GM10248 (cell line): ENCODE measurements at regions of chr10 and their contacts with region 1.

Region 1: GRCh38 chr10:124719213-124719851 is 24.8 kb downstream of the FAM53B start:
- DNase-seq: peak; percentile 67
- CTCF ChIP-seq: peak; percentile 48

Region 2: DNA sequence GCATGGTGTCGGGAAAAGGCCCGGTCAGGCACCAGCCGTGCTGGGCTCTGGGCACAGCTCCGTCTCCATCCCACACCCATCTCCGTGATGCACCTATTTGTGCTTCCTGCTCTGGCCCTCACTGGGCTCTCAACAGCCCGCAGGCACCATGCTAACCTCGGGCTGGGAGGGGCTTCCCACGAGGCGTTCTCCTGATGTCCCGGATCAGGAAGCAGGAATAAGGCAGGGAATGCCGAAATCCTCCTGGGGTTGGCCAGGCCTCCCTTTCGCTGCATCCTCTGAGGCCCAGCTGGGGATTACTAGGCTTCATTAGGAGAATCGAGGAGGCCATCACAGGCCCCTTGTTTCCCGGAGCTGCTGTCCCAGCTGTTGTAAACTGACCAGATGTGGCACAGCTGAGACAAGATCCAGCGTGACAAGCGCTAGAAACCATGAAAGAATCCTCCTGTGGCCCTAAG is 47.1 kb before region 1 on chr10:
- CTCF ChIA-PET with region 1: no interaction called
- POLR2A ChIA-PET with region 1: no interaction called
- DNase-seq: no peak
- CTCF ChIP-seq: no peak

Region 3: DNA sequence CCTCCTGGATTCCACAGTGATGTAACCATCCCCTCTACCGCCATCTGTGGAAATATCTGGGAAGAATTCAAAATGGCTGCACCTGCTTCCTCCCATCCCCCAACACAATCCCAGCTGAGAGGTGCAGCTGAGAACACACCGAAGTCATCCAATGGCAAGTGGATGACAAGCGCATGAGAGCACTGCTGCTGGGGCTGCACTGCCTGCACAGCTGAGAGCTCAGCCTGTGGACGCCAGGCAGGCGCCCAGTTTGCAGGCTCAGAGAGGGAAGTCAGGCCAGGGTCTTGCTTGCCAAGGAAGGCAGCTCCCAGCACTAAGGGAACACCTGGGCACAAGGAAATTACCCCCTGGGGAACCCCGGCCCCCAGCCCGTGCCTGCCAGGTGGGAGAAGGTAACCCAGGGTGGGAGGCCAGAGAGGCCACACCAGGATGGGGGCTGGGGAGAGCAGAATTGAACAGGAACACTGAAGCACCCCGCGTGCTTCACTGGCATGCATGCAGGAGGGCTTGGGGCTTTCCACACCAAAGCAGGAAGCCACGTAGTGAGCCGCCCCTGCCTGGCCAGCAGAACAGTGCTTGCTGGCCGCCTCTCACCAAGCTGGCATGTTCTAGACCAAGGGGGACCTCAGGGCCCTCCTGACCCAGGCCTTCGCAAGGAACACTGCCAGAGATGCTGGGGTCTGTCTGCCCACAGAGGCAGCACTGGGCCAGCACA is 21.3 kb before region 1 on chr10:
- CTCF ChIA-PET with region 1: interaction called, 86 read pairs
- POLR2A ChIA-PET with region 1: no interaction called
- DNase-seq: peak; percentile 64
- CTCF ChIP-seq: no peak

Region 4: GRCh38 chr10:124703778-124704427 is 15.4 kb before region 1 on chr10:
- CTCF ChIA-PET with region 1: interaction called, 86 read pairs
- POLR2A ChIA-PET with region 1: no interaction called
- DNase-seq: no peak
- CTCF ChIP-seq: no peak

Region 5: DNA sequence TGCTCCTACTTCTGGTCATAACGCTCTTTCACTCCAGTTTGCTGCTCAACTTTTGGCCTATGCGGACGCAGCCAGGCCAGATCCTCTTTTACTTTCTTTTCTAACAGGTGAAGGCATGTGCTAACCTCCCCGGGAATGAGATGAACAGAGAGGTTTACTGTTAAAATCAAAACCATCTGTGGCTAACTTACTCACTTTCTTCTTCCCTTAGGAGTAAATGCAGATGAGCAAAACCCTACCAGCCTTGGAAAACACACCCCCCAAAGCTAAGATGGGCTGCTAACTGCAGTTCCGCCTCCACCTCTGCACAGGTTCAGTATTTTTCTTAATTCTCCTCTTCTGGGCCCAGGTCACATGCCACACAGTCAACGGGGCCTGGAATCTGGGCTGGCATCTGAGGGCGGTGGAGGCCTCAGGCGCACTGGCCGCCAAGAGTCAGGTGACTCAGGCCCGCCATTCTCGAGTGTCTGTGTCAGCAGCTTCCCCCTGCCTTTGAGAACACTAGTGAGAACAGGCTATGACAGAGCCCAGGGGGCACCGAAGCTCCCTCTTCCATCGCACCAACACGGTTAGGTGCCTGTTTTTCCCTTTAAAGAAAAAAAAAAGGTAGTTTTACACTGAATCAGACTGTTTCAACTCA is 13.7 kb after region 1 on chr10:
- CTCF ChIA-PET with region 1: interaction called, 52 read pairs
- POLR2A ChIA-PET with region 1: no interaction called
- DNase-seq: peak; percentile 63
- CTCF ChIP-seq: no peak

Region 6: GRCh38 chr10:124911124-124912067 is 192.1 kb after region 1 on chr10:
- CTCF ChIA-PET with region 1: no interaction called
- POLR2A ChIA-PET with region 1: no interaction called
- DNase-seq: no peak
- CTCF ChIP-seq: no peak